AG04450 (cell line): ENCODE measurements at regions of chr6 and their contacts with region 1.

Region 1: DNA sequence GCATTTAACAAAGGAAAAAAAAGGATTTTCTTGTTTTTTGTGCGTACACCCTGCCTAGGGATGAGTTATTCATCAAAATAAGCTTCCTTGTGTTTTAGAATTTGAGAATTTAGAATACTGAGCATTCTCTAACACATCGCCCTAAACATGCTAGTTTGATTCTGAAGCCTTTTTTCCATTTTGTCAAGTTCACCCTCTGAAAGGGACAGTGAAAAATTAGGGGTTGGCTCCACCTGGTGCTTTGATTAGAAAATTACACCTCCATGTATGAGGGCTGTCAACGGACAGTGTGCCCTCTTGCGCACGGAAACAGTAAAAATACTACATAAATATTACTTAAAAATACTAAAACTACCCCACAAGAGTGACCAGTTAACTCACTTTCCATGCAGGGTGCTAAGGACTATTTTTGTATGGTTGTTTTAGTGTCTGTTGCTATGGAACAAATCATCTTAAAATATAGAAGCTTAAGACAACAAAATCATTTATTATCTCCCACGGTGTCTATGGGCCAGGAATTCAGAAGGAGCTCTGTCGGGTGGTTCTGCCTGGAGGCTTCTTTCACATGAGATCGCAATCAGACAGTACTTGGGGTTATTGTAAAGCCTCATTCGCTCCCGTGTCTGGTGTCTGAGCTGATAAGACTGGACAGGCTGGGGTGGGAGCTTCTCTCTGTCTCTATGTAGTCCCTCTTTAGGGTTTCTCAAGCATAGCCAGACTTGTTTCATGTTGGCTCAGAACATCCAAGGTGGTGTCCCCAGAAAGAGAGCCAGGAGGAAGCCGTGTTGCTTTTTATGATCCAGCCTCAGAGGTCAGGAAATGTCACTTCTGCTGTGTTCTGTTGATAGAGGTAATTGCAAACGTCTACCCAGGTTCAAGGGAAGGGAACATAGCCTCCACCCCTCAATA is 41.1 kb upstream of the TMEM170B start:
- DNase-seq: peak; percentile 74
- H3K4me3 ChIP-seq: no peak overlapping the region
- H3K27ac ChIP-seq: no peak overlapping the region
- H3K27me3 ChIP-seq: no peaks in the 10 kb centered on the region
- CTCF ChIP-seq: peak; percentile 83

Region 2: DNA sequence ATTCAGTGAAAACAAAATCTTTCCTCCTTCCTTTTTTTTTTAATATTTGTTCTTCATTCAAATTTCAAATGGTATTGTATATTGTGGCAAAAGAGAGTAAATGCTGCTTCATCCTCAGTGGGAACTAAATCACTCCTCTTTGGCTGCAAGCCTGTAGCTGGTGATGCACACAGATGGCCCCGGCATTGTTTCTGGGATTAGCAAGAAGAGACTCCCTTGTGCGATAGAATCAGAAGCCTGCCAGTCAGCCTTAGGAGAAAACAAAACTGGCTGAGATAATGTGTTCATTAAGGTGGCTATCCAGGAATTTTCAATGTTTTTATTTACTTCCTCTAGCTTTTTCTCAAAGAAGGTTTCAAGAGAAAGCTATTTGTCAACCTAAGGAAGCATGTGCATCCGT is 431.6 kb before region 1 on chr6:
- CTCF ChIA-PET with region 1: interaction called, 21 read pairs
- POLR2A ChIA-PET with region 1: no interaction called
- DNase-seq: no peak
- H3K4me3 ChIP-seq: no peak overlapping the region
- H3K27ac ChIP-seq: no peak overlapping the region
- H3K27me3 ChIP-seq: peaks cover 9% of the 10 kb centered on the region
- CTCF ChIP-seq: no peak

Region 3: GRCh38 chr6:11139056-11139960 is 357.1 kb before region 1 on chr6:
- CTCF ChIA-PET with region 1: interaction called, 139 read pairs
- POLR2A ChIA-PET with region 1: no interaction called
- DNase-seq: no peak
- H3K4me3 ChIP-seq: no peak overlapping the region
- H3K27ac ChIP-seq: peak overlapping the region; percentile 62
- H3K27me3 ChIP-seq: no peaks in the 10 kb centered on the region
- CTCF ChIP-seq: no peak

Region 4: DNA sequence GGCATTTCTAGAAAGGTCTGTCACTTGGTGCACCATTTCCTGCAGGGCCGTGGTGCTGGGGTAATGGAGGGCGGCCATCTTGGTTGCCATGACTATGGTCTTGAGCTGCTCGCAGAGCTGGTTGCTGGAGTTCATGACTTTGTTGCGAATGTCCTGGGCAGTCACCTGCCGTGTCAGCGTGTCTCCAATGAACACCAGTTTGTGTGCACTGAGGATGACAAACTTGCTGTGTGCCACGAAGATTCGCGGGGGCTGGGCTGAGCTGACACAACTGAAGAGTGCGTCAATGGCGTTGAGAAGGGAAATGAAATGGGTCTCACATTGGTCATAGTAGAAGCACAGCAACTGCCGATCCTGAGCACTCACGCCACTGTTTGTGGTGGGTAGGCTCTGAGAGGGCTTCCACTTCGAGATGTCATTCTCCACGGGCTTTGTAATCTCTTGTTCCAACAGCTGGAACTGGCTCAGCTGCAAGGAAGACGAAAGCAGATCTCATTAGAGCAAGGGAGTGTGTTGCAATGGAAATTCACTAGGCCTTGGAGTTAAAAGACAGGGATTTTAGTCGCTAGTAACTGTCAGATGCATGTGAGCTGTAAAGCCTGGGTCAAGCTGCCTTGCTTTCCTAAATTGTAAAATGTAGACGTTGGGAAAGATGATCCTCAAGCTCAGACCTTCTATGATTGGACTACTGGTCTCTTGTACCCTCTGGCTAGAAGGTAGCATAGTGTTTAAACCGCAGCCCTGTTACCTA is 311.0 kb before region 1 on chr6:
- CTCF ChIA-PET with region 1: interaction called, 11 read pairs
- POLR2A ChIA-PET with region 1: no interaction called
- DNase-seq: no peak
- H3K4me3 ChIP-seq: no peak overlapping the region
- H3K27ac ChIP-seq: no peak overlapping the region
- H3K27me3 ChIP-seq: no peaks in the 10 kb centered on the region
- CTCF ChIP-seq: no peak

Region 5: DNA sequence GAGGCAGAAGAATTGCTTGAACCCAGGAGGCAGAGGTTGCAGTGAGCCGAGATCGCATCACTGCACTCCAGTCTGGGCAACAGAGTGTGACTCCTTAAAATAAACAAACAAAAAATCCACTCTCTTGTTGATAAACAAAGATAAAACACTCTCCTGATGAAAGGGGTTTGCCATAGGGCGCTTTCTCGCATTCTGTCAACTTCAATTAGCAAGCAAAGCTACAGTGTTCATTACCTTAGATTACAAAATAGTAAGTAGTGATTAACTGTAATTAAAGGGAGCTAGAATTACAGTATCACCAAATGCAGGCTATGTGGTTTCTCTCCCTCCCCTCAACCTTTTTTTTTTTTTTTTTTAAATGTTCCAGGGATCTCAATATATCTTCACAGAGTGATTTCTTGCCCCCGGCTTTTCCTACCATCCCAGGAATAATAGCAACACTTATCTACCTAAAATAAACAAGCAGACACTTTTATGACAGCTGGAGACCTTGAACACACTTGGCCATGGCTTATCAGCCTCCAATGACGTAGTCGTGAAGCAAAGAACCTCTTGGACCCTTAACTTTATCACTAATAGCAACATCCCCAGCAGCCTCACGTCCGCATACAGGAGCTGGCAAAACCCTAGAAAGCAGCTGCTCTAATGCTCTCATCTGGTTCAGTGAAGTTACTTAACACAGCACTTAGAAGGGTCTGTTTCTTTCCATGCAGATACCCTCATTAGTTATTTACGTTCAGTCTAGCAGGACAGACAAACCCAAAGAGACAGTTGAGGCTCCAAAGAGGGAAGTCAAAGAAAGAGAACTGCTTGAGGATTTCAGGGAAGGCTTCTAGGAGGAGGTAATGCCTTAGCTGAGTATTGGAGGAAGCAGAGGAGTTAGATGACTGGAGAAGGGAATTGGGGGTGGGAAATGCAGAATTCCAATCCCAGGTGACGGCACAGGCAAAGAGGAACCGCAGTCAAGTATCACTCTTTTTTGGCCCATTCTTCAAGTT is 226.1 kb before region 1 on chr6:
- CTCF ChIA-PET with region 1: interaction called, 10 read pairs
- POLR2A ChIA-PET with region 1: no interaction called
- DNase-seq: no peak
- H3K4me3 ChIP-seq: no peak overlapping the region
- H3K27ac ChIP-seq: peak overlapping the region; percentile 88
- H3K27me3 ChIP-seq: no peaks in the 10 kb centered on the region
- CTCF ChIP-seq: no peak

Region 6: GRCh38 chr6:11475016-11475415 is 21.4 kb before region 1 on chr6:
- CTCF ChIA-PET with region 1: interaction called, 19 read pairs
- POLR2A ChIA-PET with region 1: no interaction called
- DNase-seq: no peak
- H3K4me3 ChIP-seq: no peak overlapping the region
- H3K27ac ChIP-seq: no peak overlapping the region
- H3K27me3 ChIP-seq: peaks cover 10% of the 10 kb centered on the region
- CTCF ChIP-seq: no peak

Region 7: DNA sequence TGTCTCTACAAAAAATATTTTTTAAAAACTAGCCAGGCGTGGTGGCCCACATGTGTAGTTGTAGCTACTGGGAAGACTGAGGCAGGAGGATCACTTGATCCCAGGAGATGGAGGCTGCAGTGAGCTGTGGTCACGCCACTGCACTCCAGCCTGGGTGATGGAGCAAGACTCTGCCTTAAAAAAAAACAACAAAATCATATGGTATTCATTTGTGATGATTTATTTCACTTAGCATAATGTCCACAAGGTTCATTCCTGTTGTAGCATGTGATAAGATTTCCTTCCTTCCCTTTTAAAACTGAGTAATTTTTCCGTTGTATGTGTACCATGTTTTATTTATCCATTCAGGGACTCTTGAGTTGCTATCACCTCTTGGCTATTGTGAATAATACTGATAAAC is 67.4 kb after region 1 on chr6:
- CTCF ChIA-PET with region 1: no interaction called
- POLR2A ChIA-PET with region 1: no interaction called
- DNase-seq: no peak
- H3K4me3 ChIP-seq: no peak overlapping the region
- H3K27ac ChIP-seq: no peak overlapping the region
- H3K27me3 ChIP-seq: no peaks in the 10 kb centered on the region
- CTCF ChIP-seq: no peak